Naive thymus-derived CD4-positive, alpha-beta T cell (primary cell): ENCODE measurements at regions of chr1 and their contacts with region 1.

Region 1: GRCh38 chr1:168342572-168343280 is 62.0 kb downstream of the TBX19 start:
- DNase-seq: peak; percentile 66 to 90 (median 86)
- ATAC-seq: peak; percentile 100
- H3K4me3 ChIP-seq: peak overlapping the region; percentile 30
- H3K4me3 Mint-ChIP-seq: peak overlapping the region in 9 of 10 donors; percentile 5 to 66 (median 57)
- H3K27ac ChIP-seq: peak overlapping the region; percentile 12
- H3K27ac Mint-ChIP-seq: peak overlapping the region; percentile 80 to 96 (median 90)
- H3K4me1 ChIP-seq: peaks cover 0 to 33% of the 10 kb centered on the region in 2 donors
- H3K4me1 Mint-ChIP-seq: peaks cover 13 to 55% (median 31%) of the 10 kb centered on the region in 7 donors
- H3K27me3 ChIP-seq: no peaks in the 10 kb centered on the region
- H3K27me3 Mint-ChIP-seq: no peaks in the 10 kb centered on the region

Region 2: GRCh38 chr1:167022384-167022783 is 1320.3 kb before region 1 on chr1:
- CTCF ChIA-PET with region 1: no interaction called
- POLR2A ChIA-PET with region 1: no interaction called
- intact Hi-C with region 1: no loop called
- DNase-seq: no peak
- ATAC-seq: no peak
- H3K4me3 ChIP-seq: no peak overlapping the region
- H3K4me3 Mint-ChIP-seq: no peak overlapping the region
- H3K27ac ChIP-seq: no peak overlapping the region
- H3K27ac Mint-ChIP-seq: no peak overlapping the region
- H3K4me1 ChIP-seq: no peaks in the 10 kb centered on the region
- H3K4me1 Mint-ChIP-seq: no peaks in the 10 kb centered on the region
- H3K27me3 ChIP-seq: no peaks in the 10 kb centered on the region
- H3K27me3 Mint-ChIP-seq: peaks cover 14 to 31% (median 24%) of the 10 kb centered on the region in 5 donors

Region 3: DNA sequence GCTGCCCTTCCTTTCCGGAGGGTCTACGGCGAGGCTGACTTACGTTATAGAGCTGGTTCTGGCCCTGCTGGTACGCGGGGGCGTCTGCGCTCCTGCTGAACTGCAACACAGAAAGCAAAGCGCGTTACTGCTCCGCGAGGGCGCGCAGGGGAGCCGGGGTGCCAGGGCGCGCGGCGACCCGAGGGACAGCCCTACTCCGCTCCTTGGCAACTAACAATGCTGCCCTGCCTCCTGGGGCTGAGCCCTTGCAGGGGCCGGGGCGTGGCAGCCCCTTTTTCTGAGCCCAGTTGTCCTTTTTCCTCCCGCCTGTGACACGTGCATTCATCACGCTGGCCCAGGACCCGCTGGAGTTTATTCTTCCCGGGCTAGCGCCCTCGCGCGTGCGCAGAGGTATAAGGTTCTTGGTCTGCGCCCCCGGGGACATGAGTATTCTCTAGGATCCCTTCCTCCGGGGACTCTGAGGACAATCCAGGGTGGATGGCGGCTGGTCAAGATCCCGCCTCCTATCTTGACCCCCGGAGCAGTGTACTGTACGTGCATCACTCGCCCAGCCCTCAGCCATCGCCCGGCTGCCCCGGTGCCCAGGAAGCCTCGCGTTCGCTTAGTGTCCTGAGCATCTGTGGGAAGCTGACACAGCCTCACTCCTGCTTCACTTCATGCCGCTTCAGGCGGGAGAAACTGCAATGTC is 903.3 kb before region 1 on chr1:
- CTCF ChIA-PET with region 1: no interaction called
- POLR2A ChIA-PET with region 1: no interaction called
- intact Hi-C with region 1: no loop called
- DNase-seq: peak in 6 of 9 donors; percentile 40 to 56 (median 50)
- ATAC-seq: peak; percentile 30
- H3K4me3 ChIP-seq: no peak overlapping the region
- H3K4me3 Mint-ChIP-seq: peak overlapping the region in 9 of 10 donors; percentile 50 to 86 (median 78)
- H3K27ac ChIP-seq: peak overlapping the region; percentile 57
- H3K27ac Mint-ChIP-seq: peak overlapping the region; percentile 66 to 96 (median 92)
- H3K4me1 ChIP-seq: peaks cover 45 to 77% of the 10 kb centered on the region in 2 donors
- H3K4me1 Mint-ChIP-seq: peaks cover 54 to 92% (median 90%) of the 10 kb centered on the region in 7 donors
- H3K27me3 ChIP-seq: no peaks in the 10 kb centered on the region
- H3K27me3 Mint-ChIP-seq: no peaks in the 10 kb centered on the region

Region 4: DNA sequence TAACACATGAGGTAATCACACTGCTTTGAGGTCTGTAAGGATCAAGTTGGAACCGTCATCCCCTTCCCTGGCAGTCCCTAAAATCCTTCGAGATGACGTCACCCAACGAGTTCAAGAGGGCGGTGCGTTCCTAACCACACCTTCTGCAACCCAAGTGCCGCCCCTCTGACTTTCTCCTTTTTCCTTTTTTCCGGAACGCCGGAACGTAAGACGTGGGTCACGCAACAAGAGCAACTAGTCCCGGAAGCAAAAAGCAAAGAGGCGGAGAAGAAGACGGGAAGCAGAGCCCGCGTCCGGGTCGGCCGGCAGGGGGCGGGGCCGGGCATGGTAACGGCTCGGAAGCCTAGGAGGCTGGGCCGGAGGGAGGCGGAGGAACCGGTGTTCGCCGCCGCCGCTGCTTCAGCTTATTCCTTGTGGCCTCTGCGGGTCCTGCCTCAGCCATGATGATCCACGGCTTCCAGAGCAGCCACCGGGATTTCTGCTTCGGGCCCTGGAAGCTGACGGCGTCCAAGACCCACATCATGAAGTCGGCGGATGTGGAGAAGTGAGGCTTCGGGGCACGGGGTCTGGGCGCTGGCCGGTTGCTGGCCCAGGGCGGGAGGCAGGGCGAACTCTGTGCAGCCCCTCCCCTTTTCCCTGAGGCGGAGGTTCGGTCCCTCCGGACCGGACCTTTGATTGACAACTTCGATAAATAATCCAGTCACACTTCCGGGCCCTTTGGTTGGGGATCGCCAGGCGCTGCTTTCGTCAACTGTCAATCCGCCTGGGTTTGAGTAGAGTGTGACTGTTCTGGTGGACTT is 163.9 kb before region 1 on chr1 and contains the start of gene TIPRL:
- CTCF ChIA-PET with region 1: no interaction called
- POLR2A ChIA-PET with region 1: no interaction called
- intact Hi-C with region 1: loop called in 1 of 2 experiments (anchors 2 kb)
- DNase-seq: peak; percentile 88 to 94 (median 93)
- ATAC-seq: peak; percentile 95
- H3K4me3 ChIP-seq: peak within 1 kb of the TSS; percentile 80
- H3K4me3 Mint-ChIP-seq: no peak within 1 kb of the TSS
- H3K27ac ChIP-seq: peak within 1 kb of the TSS; percentile 96
- H3K27ac Mint-ChIP-seq: no peak within 1 kb of the TSS
- H3K4me1 ChIP-seq: peaks cover 14 to 16% of the 10 kb centered on the region in 2 donors
- H3K4me1 Mint-ChIP-seq: peaks cover 3 to 20% (median 9%) of the 10 kb centered on the region in 7 donors
- H3K27me3 ChIP-seq: no peaks in the 10 kb centered on the region
- H3K27me3 Mint-ChIP-seq: peaks cover 2 to 9% (median 2%) of the 10 kb centered on the region in 5 donors
- total RNA-seq, gene TIPRL: 17.2 to 41.2 (median 23.5) TPM

Region 5: DNA sequence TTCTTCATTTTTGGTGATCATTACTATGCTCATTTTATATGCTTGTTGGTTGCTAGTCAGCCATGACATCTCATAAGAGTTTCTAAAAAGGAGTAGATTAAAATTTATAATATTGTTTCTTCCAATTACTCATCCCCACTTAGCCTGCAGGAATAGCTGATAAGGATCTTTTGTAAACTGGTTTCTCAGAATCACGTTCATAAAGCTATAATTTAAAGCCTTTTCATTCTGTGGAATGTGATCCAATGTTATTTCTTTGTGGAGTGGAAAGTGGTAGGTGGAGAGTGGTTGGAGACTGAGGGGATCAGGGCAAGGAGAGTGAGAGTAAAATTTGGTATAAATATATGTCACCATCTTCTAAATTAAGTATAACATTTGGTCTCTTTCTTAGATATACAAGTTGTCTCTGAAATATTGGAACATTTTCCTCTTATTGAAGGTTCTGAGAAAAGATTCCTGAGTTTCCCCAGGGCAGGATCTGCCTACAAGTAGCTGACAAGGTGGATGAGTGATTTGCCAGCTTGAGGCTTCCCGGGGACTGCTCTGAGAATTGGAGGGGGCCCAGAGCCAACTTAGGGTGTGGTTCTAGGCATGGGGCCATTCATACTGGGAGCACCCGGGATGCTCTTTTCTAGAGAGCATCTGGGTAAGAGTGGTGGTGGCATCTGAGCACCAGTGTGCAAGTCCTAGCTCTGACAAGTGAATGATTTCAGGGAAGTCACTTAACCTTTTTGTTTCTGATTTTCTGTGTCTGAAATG is 54.4 kb after region 1 on chr1:
- CTCF ChIA-PET with region 1: no interaction called
- POLR2A ChIA-PET with region 1: no interaction called
- intact Hi-C with region 1: loop called in 1 of 2 experiments (anchors 2 kb)
- DNase-seq: no peak
- ATAC-seq: no peak
- H3K4me3 ChIP-seq: no peak overlapping the region
- H3K4me3 Mint-ChIP-seq: no peak overlapping the region
- H3K27ac ChIP-seq: no peak overlapping the region
- H3K27ac Mint-ChIP-seq: no peak overlapping the region
- H3K4me1 ChIP-seq: peaks cover 0 to 11% of the 10 kb centered on the region in 2 donors
- H3K4me1 Mint-ChIP-seq: peaks cover 0 to 28% (median 0%) of the 10 kb centered on the region in 7 donors
- H3K27me3 ChIP-seq: no peaks in the 10 kb centered on the region
- H3K27me3 Mint-ChIP-seq: peaks cover 5 to 32% (median 10%) of the 10 kb centered on the region in 5 donors

Region 6: GRCh38 chr1:168535536-168535935 is 192.8 kb after region 1 on chr1:
- CTCF ChIA-PET with region 1: interaction called, 8 read pairs
- POLR2A ChIA-PET with region 1: interaction called, 3 read pairs
- intact Hi-C with region 1: loop called in 1 of 2 experiments (anchors 2 kb)
- DNase-seq: peak in 7 of 9 donors; percentile 40 to 66 (median 56)
- ATAC-seq: peak; percentile 89
- H3K4me3 ChIP-seq: peak overlapping the region; percentile 5
- H3K4me3 Mint-ChIP-seq: peak overlapping the region; percentile 60 to 86 (median 76)
- H3K27ac ChIP-seq: peak overlapping the region; percentile 43
- H3K27ac Mint-ChIP-seq: peak overlapping the region; percentile 83 to 96 (median 89)
- H3K4me1 ChIP-seq: peaks cover 55 to 59% of the 10 kb centered on the region in 2 donors
- H3K4me1 Mint-ChIP-seq: peaks cover 59 to 93% (median 86%) of the 10 kb centered on the region in 7 donors
- H3K27me3 ChIP-seq: no peaks in the 10 kb centered on the region
- H3K27me3 Mint-ChIP-seq: no peaks in the 10 kb centered on the region

Region 7: DNA sequence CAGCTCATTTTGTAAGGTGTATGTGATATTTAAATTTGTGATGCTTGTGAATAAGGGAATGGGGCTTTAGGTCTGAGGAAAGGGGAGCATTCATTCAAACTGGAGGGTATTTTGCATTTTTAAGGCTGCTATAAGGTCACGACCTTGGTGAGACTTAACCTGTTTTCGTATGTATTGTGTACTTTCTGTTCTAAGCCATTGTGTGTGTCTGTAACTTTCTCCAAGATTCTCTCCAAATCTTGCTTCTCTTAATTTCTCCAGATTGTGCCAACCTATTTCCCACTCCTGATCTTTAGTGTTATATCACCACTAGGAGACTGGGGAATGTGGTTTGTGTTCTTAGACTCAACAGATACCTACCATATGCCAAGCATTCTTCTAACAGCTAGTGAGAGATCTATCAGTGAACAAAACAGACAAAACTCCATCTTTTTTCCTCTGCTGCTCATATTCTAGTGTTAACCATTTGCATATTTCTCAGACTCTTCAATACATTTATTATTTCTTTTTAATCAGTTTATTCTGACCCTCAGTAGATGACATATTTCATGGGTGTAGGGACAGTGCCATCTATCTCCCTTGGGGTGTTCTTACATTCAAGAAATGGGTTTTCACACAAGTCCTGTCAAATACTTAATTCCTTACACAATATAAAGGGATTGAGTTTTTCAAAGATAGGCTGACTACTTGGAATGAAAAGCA is 791.2 kb after region 1 on chr1:
- CTCF ChIA-PET with region 1: no interaction called
- POLR2A ChIA-PET with region 1: no interaction called
- intact Hi-C with region 1: loop called in 1 of 2 experiments (anchors 1 kb)
- DNase-seq: no peak
- ATAC-seq: no peak
- H3K4me3 ChIP-seq: no peak overlapping the region
- H3K4me3 Mint-ChIP-seq: no peak overlapping the region
- H3K27ac ChIP-seq: no peak overlapping the region
- H3K27ac Mint-ChIP-seq: no peak overlapping the region
- H3K4me1 ChIP-seq: no peaks in the 10 kb centered on the region
- H3K4me1 Mint-ChIP-seq: peaks cover 0 to 8% (median 0%) of the 10 kb centered on the region in 7 donors
- H3K27me3 ChIP-seq: no peaks in the 10 kb centered on the region
- H3K27me3 Mint-ChIP-seq: no peaks in the 10 kb centered on the region

Region 8: GRCh38 chr1:169694304-169695075 is 1351.8 kb after region 1 on chr1:
- CTCF ChIA-PET with region 1: no interaction called
- POLR2A ChIA-PET with region 1: no interaction called
- intact Hi-C with region 1: loop called in 1 of 2 experiments (anchors 5 kb)
- DNase-seq: peak in 7 of 9 donors; percentile 63 to 85 (median 76)
- ATAC-seq: peak; percentile 71
- H3K4me3 ChIP-seq: peak overlapping the region; percentile 18
- H3K4me3 Mint-ChIP-seq: peak overlapping the region in 9 of 10 donors; percentile 21 to 86 (median 71)
- H3K27ac ChIP-seq: peak overlapping the region; percentile 70
- H3K27ac Mint-ChIP-seq: peak overlapping the region in 4 of 9 donors; percentile 86 to 98 (median 94)
- H3K4me1 ChIP-seq: peaks cover 91 to 92% of the 10 kb centered on the region in 2 donors
- H3K4me1 Mint-ChIP-seq: peaks cover 0 to 89% (median 74%) of the 10 kb centered on the region in 7 donors
- H3K27me3 ChIP-seq: no peaks in the 10 kb centered on the region
- H3K27me3 Mint-ChIP-seq: no peaks in the 10 kb centered on the region